BJ (cell line): ENCODE measurements at regions of chr12 and their contacts with region 1.

Region 1: DNA sequence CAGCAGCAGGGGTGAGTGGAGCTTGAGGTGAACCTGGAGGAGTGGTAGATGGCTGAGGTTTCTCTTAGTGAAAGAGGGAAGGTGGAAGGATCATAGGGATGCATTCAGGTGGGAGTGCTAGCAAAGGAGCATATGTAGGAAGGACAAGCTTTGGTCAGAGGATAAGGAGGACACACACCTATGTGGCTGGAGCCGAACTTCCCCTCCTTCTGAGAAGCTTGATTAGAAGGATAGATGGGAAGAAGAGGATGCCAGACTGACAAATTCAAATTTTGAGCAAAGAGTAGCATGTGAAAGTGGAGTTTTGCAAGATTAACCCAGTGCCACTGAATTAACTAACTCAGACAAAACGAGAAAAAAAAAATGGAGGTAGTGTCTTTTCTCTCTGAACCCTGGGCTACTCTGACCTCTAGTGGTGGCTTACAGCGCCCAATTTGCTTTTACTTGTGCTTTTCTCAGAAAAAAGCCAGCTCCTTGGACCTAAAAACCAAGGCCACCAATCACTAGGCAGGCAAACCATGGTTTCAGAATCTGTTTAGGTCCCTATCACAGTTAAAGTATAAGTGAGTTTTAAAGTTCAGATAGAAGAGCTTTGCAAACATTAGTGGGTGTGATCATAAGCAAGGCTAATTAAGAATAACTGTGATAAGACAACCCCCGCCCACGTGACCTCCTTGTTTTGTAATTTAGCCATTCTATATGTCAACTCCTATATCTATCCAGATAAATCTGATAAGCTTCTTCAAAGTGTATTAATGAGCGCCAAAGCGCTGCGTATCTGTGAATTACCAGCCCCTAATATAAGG is 15.5 kb downstream of the EMP1 start:
- DNase-seq: no peak
- H3K4me3 ChIP-seq: no peak overlapping the region
- H3K27me3 ChIP-seq: no peaks in the 10 kb centered on the region
- CTCF ChIP-seq: peak; percentile 84

Region 2: GRCh38 chr12:13008741-13009380 is 203.2 kb before region 1 on chr12:
- CTCF ChIA-PET with region 1: interaction called, 14 read pairs
- POLR2A ChIA-PET with region 1: no interaction called
- DNase-seq: no peak
- H3K4me3 ChIP-seq: no peak overlapping the region
- H3K27me3 ChIP-seq: no peaks in the 10 kb centered on the region
- CTCF ChIP-seq: no peak

Region 3: DNA sequence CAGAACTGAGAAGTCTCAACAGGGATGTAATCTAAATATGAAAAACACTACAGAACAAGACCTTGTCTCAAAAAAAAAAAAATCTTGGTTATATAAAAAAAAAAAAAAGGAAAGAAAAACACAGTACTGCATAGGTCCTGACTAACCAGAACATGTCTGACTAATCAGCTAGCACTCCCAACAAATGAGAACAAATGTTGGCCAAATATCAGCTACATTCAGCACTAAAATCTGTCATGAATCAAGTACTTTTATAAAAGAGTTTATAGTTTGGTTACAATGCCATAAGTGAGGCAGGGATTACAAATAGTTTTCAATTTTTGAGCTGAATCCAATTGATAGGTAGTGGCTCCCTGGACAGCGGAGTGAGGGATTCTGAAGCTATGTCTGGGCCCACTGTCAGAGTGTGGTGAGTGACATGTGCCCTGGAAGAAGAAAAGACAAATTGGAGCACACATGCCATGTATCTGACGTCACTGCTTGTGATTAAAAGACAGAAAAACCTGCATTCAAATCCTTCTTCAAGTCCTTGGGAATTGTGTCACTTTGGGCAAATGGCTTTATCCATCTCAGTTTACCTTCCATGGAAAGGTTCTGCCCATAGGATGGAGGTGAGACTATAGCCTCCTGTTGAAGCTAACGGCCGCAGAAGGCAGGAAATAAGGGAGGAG is 173.4 kb before region 1 on chr12:
- CTCF ChIA-PET with region 1: interaction called, 18 read pairs
- POLR2A ChIA-PET with region 1: no interaction called
- DNase-seq: peak; percentile 61
- H3K4me3 ChIP-seq: no peak overlapping the region
- H3K27me3 ChIP-seq: peaks cover 2% of the 10 kb centered on the region; the same call in 1 of the 2 replicates
- CTCF ChIP-seq: no peak

Region 4: GRCh38 chr12:13100882-13101769 is 110.9 kb before region 1 on chr12:
- CTCF ChIA-PET with region 1: interaction called, 22 read pairs
- POLR2A ChIA-PET with region 1: no interaction called
- DNase-seq: peak; percentile 58
- H3K4me3 ChIP-seq: peak overlapping the region; percentile 35
- H3K27me3 ChIP-seq: no peaks in the 10 kb centered on the region
- CTCF ChIP-seq: no peak

Region 5: GRCh38 chr12:13233830-13234641 is 22.0 kb after region 1 on chr12:
- CTCF ChIA-PET with region 1: interaction called, 15 read pairs
- POLR2A ChIA-PET with region 1: no interaction called
- DNase-seq: no peak
- H3K4me3 ChIP-seq: no peak overlapping the region
- H3K27me3 ChIP-seq: no peaks in the 10 kb centered on the region
- CTCF ChIP-seq: peak; percentile 91

Region 6: DNA sequence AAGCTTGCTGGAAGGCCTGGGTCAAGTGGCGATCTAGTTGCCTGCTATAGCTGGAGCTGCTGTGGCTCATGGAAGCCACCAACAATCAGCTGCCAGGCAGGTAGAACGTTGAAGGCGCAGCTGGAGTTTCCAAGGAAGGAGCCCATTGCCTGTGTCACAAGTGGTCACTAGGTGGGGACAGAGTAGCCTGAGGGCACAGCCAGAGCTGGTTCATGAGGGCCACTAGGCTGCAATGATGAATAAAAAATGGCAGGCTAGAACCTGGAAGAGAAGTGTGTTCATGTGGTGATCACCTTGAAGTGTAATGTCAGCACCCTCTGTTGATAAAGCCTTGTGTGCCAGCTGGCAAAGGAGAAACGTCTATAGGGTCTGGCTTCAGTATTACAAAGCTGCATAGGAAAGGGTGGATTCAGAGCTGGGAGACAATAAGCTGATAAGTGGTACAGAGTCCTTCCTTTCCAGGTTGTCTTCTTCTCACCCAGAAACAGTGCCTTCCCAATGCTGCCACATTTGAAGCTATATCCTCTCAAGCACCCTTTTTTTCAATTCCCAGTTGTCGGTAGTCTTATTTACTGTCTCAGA is 150.3 kb after region 1 on chr12:
- CTCF ChIA-PET with region 1: no interaction called
- POLR2A ChIA-PET with region 1: no interaction called
- DNase-seq: no peak
- H3K4me3 ChIP-seq: no peak overlapping the region
- H3K27me3 ChIP-seq: peaks cover 2% of the 10 kb centered on the region; the same call in 1 of the 2 replicates
- CTCF ChIP-seq: peak; percentile 89

Region 7: DNA sequence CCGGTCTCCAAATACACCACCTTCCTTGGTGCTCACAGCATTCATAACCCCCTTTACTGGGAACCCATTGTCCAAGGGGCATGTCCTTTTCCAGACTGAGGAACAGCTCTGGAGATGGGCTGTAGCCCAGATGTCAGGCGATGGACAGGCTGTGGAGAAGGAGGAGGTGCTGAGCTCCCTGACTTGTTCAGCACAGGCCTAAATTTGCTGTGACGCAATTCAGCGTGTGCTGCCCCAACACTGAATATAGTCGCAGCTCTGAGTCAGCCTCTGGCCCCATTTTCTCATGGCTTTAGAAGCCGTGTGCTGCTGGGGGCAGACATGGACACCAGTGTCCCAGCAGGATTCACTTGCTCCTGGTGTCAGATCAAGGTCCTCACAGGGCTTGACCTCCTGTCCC is 253.6 kb after region 1 on chr12:
- CTCF ChIA-PET with region 1: no interaction called
- POLR2A ChIA-PET with region 1: no interaction called
- DNase-seq: no peak
- H3K4me3 ChIP-seq: no peak overlapping the region
- H3K27me3 ChIP-seq: peaks cover 2% of the 10 kb centered on the region; the same call in 1 of the 2 replicates
- CTCF ChIP-seq: no peak

Region 8: DNA sequence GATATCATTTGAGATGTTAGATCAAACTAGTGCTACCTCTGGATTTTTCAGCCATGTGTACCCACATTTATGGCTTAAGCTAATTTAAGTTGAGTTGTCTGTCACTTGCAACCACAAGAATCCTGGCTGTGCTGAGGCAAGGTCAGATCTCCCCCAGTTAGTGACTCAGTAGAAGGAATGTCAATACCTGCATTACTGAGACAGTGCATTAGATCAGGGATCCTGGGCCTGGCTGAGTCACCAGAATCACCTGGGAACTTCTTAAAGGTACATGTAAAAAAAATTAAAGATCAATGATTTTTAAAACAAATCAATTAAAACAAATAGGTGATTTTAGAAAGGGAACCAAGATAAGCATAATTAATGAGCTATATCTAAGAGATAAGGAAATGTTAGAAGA is 854.0 kb after region 1 on chr12:
- CTCF ChIA-PET with region 1: no interaction called
- POLR2A ChIA-PET with region 1: no interaction called
- DNase-seq: no peak
- H3K4me3 ChIP-seq: no peak overlapping the region
- H3K27me3 ChIP-seq: no peaks in the 10 kb centered on the region
- CTCF ChIP-seq: no peak